ENCODE measurements at regions of chr16 and their contacts with region 1.

Region 1: GRCh38 chr16:82263521-82264143 is 93.6 kb upstream of the MPHOSPH6 start:
- DNase-seq: peak; percentile 51
- ATAC-seq: peak; percentile 96
- H3K4me3 ChIP-seq: no peak overlapping the region
- H3K27ac ChIP-seq: no peak overlapping the region
- H3K4me1 ChIP-seq: no peaks in the 10 kb centered on the region
- H3K27me3 ChIP-seq: peaks cover 17% of the 10 kb centered on the region
- CTCF ChIP-seq: peak; percentile 73
- POLR2A ChIP-seq: no peak
- RAD21 ChIP-seq: peak; percentile 82

Region 2: GRCh38 chr16:82344157-82344556 is 80.5 kb after region 1 on chr16:
- CTCF ChIA-PET with region 1: interaction called, 3 read pairs
- POLR2A ChIA-PET with region 1: no interaction called
- dilution Hi-C with region 1: no loop called
- in situ Hi-C with region 1: no loop called
- intact Hi-C with region 1: loop called (anchors 1 kb)
- DNase-seq: no peak
- ATAC-seq: peak; percentile 54; the same call in 1 of the 2 replicates
- H3K4me3 ChIP-seq: no peak overlapping the region
- H3K27ac ChIP-seq: no peak overlapping the region
- H3K4me1 ChIP-seq: no peaks in the 10 kb centered on the region
- H3K27me3 ChIP-seq: no peaks in the 10 kb centered on the region
- CTCF ChIP-seq: no peak
- POLR2A ChIP-seq: no peak
- RAD21 ChIP-seq: no peak

Region 3: DNA sequence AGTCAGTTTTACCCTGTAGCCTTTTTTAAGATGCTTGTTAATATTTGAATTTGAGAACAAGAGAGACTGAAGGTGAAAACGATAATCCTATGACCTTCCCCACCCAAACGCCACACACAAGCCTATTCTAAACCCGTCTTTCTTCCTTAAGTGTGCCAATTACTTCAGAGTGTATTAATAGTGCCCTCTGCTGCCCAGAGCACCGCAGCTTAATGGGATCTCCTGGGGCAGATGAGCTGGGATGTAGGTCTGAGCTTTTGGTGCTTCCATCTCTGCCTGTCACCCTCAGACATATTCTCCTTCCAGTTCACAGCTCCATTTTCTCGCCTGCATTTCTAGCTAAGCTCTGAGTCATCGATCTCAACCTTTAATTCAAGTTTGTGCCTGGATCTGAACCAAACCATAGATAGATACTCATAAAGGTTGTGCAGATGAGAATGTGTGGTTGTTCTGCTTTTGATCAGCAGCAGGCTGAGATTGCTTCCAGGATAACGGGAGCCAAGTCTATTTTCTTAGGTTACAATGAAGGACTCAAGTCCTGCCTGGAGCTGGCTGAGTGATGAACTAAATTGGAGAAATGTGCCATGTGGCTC is 316.8 kb after region 1 on chr16:
- CTCF ChIA-PET with region 1: no interaction called
- POLR2A ChIA-PET with region 1: no interaction called
- dilution Hi-C with region 1: no loop called
- in situ Hi-C with region 1: no loop called
- intact Hi-C with region 1: loop called (anchors 1 kb)
- DNase-seq: no peak
- ATAC-seq: peak; percentile 48; the same call in 1 of the 2 replicates
- H3K4me3 ChIP-seq: no peak overlapping the region
- H3K27ac ChIP-seq: no peak overlapping the region
- H3K4me1 ChIP-seq: no peaks in the 10 kb centered on the region
- H3K27me3 ChIP-seq: peaks cover 2% of the 10 kb centered on the region; the same call in 1 of the 2 replicates
- CTCF ChIP-seq: peak; percentile 20; the same call in 1 of the 2 replicates
- POLR2A ChIP-seq: no peak
- RAD21 ChIP-seq: peak; percentile 13; the same call in 1 of the 2 replicates

Region 4: DNA sequence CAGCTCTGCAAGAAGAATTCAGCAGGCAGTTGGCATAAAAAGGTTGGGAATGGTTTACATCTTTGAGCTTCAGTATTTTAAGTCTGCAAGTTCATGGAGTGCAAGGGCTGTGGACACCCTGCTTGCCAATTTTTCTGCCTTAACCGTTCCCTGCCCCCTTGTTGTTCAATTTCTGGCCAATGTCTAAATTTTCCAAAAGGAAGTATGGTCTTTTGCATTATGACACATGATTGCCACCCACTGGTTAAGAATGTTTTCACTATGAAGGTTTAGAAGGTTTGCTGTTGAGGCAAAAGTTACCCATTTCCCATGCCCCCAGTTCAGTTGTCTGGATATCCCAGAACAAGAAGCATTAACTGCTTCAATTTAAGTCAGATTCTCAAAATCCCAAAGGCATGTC is 805.1 kb after region 1 on chr16:
- CTCF ChIA-PET with region 1: no interaction called
- POLR2A ChIA-PET with region 1: no interaction called
- dilution Hi-C with region 1: no loop called
- in situ Hi-C with region 1: no loop called
- intact Hi-C with region 1: loop called (anchors 5 kb)
- DNase-seq: peak; percentile 46
- ATAC-seq: peak; percentile 40; the same call in 1 of the 2 replicates
- H3K4me3 ChIP-seq: no peak overlapping the region
- H3K27ac ChIP-seq: no peak overlapping the region
- H3K4me1 ChIP-seq: peaks cover 2% of the 10 kb centered on the region; the same call in 1 of the 2 replicates
- H3K27me3 ChIP-seq: no peaks in the 10 kb centered on the region
- CTCF ChIP-seq: peak; percentile 54
- POLR2A ChIP-seq: no peak
- RAD21 ChIP-seq: peak; percentile 56

Region 5: DNA sequence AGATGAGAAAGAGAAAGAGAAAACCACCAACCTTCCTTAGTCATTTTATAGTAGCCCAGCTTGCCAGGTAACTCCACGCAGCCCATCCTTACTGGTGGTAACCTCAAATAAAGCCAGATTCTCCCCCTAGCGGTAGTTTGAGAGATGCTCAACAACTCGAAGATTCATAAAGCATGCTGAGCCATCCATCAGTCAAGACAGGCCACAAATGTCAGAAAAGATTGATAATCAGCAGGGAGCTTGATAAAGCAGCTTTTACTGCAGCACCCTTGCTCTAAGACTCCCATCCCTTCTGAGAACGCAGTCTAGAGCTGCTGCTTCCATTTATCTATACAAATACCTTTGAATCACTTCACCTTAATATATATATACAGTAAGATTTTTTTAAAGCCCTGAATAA is 1092.6 kb after region 1 on chr16:
- CTCF ChIA-PET with region 1: no interaction called
- POLR2A ChIA-PET with region 1: no interaction called
- dilution Hi-C with region 1: no loop called
- in situ Hi-C with region 1: no loop called
- intact Hi-C with region 1: loop called (anchors 2 kb)
- DNase-seq: peak; percentile 65
- ATAC-seq: peak; percentile 81
- H3K4me3 ChIP-seq: no peak overlapping the region
- H3K27ac ChIP-seq: no peak overlapping the region
- H3K4me1 ChIP-seq: no peaks in the 10 kb centered on the region
- H3K27me3 ChIP-seq: no peaks in the 10 kb centered on the region
- CTCF ChIP-seq: peak; percentile 62
- POLR2A ChIP-seq: no peak
- RAD21 ChIP-seq: peak; percentile 67

Region 6: DNA sequence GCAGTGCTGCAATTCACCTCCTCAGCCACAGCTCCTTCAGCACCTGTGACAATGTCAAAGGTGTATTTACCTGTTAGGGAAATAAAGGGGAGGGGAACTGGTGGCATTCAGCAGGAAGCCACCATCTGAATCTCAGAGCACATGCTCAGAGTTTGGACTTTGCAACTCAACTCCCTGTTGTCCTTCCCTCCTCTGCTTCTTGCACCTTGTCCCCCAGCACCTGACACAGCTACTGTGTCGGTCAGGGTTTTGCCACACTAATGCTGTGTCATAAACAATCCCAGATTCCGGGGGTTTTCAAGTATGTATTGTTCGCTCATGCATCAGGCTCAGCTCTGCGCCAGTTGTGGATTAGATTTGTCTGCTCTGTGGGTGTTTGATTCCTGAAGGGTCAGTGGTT is 1587.8 kb after region 1 on chr16:
- CTCF ChIA-PET with region 1: no interaction called
- POLR2A ChIA-PET with region 1: no interaction called
- dilution Hi-C with region 1: no loop called
- in situ Hi-C with region 1: loop called (anchors 25 kb)
- intact Hi-C with region 1: no loop called
- DNase-seq: no peak
- ATAC-seq: no peak
- H3K4me3 ChIP-seq: no peak overlapping the region
- H3K27ac ChIP-seq: no peak overlapping the region
- H3K4me1 ChIP-seq: no peaks in the 10 kb centered on the region
- H3K27me3 ChIP-seq: peaks cover 31% of the 10 kb centered on the region
- CTCF ChIP-seq: no peak
- POLR2A ChIP-seq: no peak
- RAD21 ChIP-seq: no peak